ENCODE measurements at regions of chr7 and their contacts with region 1.

Region 1: GRCh38 chr7:123871998-123872867 is 27.3 kb downstream of the HYAL4 start:
- DNase-seq: peak; percentile 47

Region 2: DNA sequence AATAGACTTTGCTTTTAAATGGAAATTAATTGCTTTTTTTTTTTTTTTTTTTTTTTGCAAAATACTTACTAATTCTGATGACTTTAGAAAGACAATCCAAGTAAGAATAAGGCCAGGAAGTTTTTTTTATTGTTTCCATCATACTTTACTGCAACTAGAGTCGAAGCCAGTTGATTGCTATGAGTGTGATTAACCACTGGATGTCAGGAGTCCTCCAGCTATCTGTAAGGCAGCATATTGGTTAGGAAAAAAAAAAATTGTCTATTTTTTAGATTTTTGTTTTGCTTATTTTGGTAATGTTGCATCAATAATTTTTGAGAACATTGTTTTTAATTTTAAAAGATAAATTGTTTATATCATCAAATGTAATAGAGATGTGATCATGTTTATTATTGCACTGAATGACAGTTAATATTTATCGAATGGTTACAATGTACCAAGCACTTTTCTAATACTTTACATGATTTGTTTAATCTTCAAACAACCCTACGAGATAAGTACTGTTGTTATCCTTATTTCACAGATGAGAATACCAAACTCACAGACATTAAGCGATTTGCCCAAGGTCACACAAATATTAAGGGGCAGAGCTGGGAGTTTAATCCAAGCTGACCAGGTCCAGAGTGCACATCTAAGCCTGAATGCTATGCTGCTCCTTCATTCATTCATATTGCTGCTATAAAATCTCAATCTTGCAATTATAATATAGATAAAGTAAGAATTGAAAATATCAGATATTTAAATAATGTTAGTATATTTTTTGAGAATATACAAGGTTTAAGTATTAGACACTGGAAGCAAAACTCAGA is 236.5 kb before region 1 on chr7:
- CTCF ChIA-PET with region 1: interaction called, 10 read pairs
- POLR2A ChIA-PET with region 1: no interaction called
- DNase-seq: peak; percentile 25

Region 3: DNA sequence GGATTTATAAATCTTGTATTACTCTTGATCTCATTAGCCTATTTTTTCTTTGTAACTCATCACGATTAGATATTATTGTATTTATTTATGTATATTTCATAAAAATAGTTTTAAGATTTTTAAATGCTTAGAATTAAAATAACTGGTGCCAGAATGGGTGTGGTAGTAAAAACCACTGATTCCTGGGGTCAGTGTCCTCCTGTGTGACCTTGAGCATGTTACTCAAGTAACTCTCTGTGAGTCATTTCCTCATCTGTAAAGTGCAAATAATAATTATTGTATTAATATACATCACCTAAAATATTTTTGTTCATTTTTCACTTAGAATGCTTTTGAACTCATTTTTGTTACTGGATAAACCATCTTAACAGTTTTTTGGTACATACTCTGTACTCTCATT is 252.0 kb after region 1 on chr7:
- CTCF ChIA-PET with region 1: no interaction called
- POLR2A ChIA-PET with region 1: no interaction called
- DNase-seq: no peak